Activated naive CD4-positive, alpha-beta T cell treated with anti-CD3 and anti-CD28 coated beads for 36 hours (primary cell): ENCODE measurements at regions of chr15 and their contacts with region 1.

Region 1: GRCh38 chr15:45714590-45715488 is 80.0 kb downstream of the SQOR start:
- DNase-seq: peak; percentile 73
- H3K4me3 Mint-ChIP-seq: no peak overlapping the region
- H3K27ac Mint-ChIP-seq: no peak overlapping the region
- H3K4me1 Mint-ChIP-seq: no peaks in the 10 kb centered on the region
- H3K27me3 Mint-ChIP-seq: peaks cover 9% of the 10 kb centered on the region

Region 2: DNA sequence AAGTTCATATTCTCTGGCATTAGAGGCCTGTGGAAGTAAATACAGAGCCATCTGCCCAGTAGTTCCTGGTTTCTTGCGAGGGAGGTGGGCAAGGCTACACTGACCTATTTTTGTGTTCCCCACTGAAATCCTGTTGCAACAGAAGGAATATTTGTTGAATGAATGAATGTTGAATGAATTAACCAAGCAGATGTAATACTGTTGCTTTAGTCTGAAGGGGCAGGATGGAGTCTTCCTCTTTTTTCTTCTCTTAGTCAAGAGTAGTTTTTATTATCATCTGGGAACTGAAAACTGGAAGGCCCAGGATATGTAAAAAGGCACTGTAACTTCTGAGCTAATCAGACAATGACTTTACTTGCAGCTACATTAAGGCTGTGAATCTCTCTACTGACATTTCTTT is 110.5 kb before region 1 on chr15:
- CTCF ChIA-PET with region 1: no interaction called
- intact Hi-C with region 1: no loop called
- DNase-seq: no peak
- H3K4me3 Mint-ChIP-seq: no peak overlapping the region
- H3K27ac Mint-ChIP-seq: peak overlapping the region; percentile 57
- H3K4me1 Mint-ChIP-seq: no peaks in the 10 kb centered on the region
- H3K27me3 Mint-ChIP-seq: no peaks in the 10 kb centered on the region

Region 3: DNA sequence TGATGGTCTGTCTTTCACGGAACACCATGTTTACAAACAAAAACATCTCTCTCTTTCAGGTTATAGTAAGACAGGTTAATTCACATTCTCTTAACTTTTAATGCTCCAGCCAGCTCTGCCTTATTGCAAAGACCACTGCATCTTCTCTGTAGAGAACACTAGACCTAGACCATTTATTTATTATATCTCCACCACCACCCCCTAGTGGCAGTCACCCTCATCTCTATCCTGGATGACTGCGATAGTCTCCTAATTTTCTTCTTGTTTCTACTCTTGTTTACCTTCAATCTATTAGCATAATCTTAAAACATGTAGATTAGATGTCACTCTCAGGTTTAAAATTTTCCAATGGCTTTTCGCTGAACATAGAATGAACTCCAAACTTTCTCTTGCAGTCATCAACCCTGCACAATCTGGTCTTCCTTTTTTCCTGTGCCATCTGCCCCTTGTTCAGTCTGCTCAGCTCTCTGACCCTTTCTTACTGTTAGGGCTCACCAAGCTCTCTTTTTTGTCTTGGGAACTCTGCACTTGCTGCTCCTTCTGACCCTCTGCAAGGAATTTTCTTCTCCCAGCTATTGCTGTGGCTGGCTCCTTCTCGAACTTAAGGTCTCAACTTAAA is 75.6 kb after region 1 on chr15:
- CTCF ChIA-PET with region 1: interaction called, 4 read pairs
- intact Hi-C with region 1: loop called (anchors 1 kb)
- DNase-seq: peak; percentile 47
- H3K4me3 Mint-ChIP-seq: no peak overlapping the region
- H3K27ac Mint-ChIP-seq: no peak overlapping the region
- H3K4me1 Mint-ChIP-seq: no peaks in the 10 kb centered on the region
- H3K27me3 Mint-ChIP-seq: peaks cover 10% of the 10 kb centered on the region

Region 4: GRCh38 chr15:45962733-45963132 is 247.9 kb after region 1 on chr15:
- CTCF ChIA-PET with region 1: no interaction called
- intact Hi-C with region 1: no loop called
- DNase-seq: no peak
- H3K4me3 Mint-ChIP-seq: no peak overlapping the region
- H3K27ac Mint-ChIP-seq: no peak overlapping the region
- H3K4me1 Mint-ChIP-seq: no peaks in the 10 kb centered on the region
- H3K27me3 Mint-ChIP-seq: no peaks in the 10 kb centered on the region

Region 5: DNA sequence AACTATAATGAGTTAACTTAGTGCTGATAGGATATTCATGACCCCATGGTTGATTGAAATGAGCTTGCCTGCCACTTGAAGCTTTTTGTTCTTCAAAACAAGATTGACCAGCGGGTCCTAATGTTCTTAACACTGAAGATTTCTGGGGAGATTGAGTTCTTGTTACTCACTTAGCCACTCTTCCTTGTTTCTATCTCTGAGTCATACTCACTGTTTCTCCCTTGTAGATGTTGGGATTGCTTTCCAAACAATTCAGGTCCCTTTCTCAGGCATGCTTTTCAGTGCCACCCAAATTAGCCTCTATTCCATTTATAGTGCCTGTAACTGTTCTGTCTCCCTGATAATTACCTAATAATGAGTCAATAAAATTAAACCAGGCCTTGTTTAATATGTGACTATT is 436.9 kb after region 1 on chr15:
- CTCF ChIA-PET with region 1: no interaction called
- intact Hi-C with region 1: no loop called
- DNase-seq: no peak
- H3K4me3 Mint-ChIP-seq: no peak overlapping the region
- H3K27ac Mint-ChIP-seq: no peak overlapping the region
- H3K4me1 Mint-ChIP-seq: no peaks in the 10 kb centered on the region
- H3K27me3 Mint-ChIP-seq: peaks cover 4% of the 10 kb centered on the region